GM12878 (cell line): ENCODE measurements at regions of chr20 and their contacts with region 1.

Region 1: DNA sequence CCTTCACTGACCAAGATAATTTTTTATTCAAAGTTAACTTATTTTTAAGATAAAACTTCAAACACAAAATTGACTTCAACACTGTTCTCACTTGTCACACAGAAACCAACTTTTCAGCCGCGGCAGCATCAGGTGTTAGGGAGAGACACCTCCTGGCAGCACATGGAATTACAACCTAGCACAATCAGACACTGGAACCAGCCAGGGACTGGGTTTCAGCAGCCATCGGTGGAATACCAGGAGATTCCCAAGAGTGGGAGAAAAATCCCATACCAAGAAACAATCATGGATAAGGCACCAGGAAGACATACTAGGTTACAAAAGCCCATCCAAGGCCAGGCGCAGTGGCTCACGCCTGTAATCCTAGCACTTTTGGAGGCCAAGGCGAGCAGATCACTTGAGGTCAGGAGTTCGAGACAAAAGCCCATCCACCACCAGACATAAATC is 70.0 kb downstream of the SNX5 start:
- DNase-seq: no peak
- ATAC-seq: peak; percentile 54
- H3K4me3 ChIP-seq: no peak overlapping the region
- H3K27ac ChIP-seq: no peak overlapping the region
- H3K4me1 ChIP-seq: peaks cover 35% of the 10 kb centered on the region
- H3K27me3 ChIP-seq: no peaks in the 10 kb centered on the region
- CTCF ChIP-seq: peak; percentile 89 to 94 (median 91)
- EP300 ChIP-seq: no peak
- POLR2A ChIP-seq: no peak
- RAD21 ChIP-seq: peak; percentile 100

Region 2: GRCh38 chr20:17504898-17505635 is 393.5 kb before region 1 on chr20:
- CTCF ChIA-PET with region 1: interaction called, 12 read pairs
- POLR2A ChIA-PET with region 1: no interaction called
- RAD21 ChIA-PET with region 1: interaction called, 8 read pairs
- SMC1A ChIA-PET with region 1: no interaction called
- in situ Hi-C with region 1: no loop called
- intact Hi-C with region 1: loop called (anchors 1 kb)
- DNase-seq: peak; percentile 25
- ATAC-seq: peak; percentile 92
- H3K4me3 ChIP-seq: peak overlapping the region; percentile 56; the same call in 1 of the 2 replicates
- H3K27ac ChIP-seq: no peak overlapping the region
- H3K4me1 ChIP-seq: peaks cover 3% of the 10 kb centered on the region
- H3K27me3 ChIP-seq: no peaks in the 10 kb centered on the region
- CTCF ChIP-seq: peak; percentile 59 to 71 (median 61)
- EP300 ChIP-seq: no peak
- POLR2A ChIP-seq: no peak
- RAD21 ChIP-seq: peak; percentile 75

Region 3: GRCh38 chr20:17654649-17655285 is 243.8 kb before region 1 on chr20:
- CTCF ChIA-PET with region 1: interaction called, 8 read pairs
- POLR2A ChIA-PET with region 1: no interaction called
- RAD21 ChIA-PET with region 1: no interaction called
- SMC1A ChIA-PET with region 1: interaction called, 4 read pairs
- in situ Hi-C with region 1: no loop called
- intact Hi-C with region 1: loop called (anchors 10 kb)
- DNase-seq: no peak
- ATAC-seq: no peak
- H3K4me3 ChIP-seq: no peak overlapping the region
- H3K27ac ChIP-seq: no peak overlapping the region
- H3K4me1 ChIP-seq: peaks cover 1% of the 10 kb centered on the region
- H3K27me3 ChIP-seq: no peaks in the 10 kb centered on the region
- CTCF ChIP-seq: peak; percentile 25 to 43 (median 32); a peak in 4 of 6 replicates
- EP300 ChIP-seq: no peak
- POLR2A ChIP-seq: no peak
- RAD21 ChIP-seq: peak; percentile 33

Region 4: DNA sequence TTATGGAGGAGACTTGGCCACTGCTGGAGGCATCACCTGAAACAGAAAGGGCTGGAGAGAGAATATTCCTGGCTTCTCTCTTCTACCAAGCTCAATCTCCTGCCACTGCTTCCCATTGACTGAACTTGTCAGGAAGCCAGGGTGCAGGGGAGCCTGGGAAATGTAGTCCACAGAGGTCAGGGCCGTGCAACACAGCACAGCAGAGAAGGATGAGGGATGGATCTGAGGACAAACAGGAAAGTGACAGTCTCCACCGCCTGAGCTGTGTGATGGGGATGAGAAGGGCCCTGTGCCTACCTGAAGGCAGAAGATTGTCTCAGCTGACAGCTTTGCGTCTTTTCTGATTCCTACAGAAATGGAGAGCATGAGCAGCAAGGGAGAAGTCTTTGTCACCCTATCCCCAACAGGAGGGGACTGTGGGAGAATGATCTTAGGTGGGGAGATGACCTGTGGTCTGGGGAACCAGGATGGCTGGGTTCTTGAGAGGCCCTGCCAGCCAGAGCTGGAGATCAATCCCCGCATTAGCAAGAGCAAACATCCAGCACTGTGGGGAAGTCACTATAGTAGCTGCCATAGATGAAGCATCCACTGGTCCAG is 44.2 kb before region 1 on chr20:
- CTCF ChIA-PET with region 1: interaction called, 10 read pairs
- POLR2A ChIA-PET with region 1: no interaction called
- RAD21 ChIA-PET with region 1: interaction called, 15 read pairs
- SMC1A ChIA-PET with region 1: interaction called, 42 read pairs
- in situ Hi-C with region 1: no loop called
- intact Hi-C with region 1: loop called (anchors 2 kb)
- DNase-seq: no peak
- ATAC-seq: peak; percentile 36
- H3K4me3 ChIP-seq: no peak overlapping the region
- H3K27ac ChIP-seq: peak overlapping the region; percentile 17; the same call in 1 of the 2 replicates
- H3K4me1 ChIP-seq: peaks cover 48% of the 10 kb centered on the region
- H3K27me3 ChIP-seq: no peaks in the 10 kb centered on the region
- CTCF ChIP-seq: no peak
- EP300 ChIP-seq: no peak
- POLR2A ChIP-seq: no peak
- RAD21 ChIP-seq: no peak

Region 5: DNA sequence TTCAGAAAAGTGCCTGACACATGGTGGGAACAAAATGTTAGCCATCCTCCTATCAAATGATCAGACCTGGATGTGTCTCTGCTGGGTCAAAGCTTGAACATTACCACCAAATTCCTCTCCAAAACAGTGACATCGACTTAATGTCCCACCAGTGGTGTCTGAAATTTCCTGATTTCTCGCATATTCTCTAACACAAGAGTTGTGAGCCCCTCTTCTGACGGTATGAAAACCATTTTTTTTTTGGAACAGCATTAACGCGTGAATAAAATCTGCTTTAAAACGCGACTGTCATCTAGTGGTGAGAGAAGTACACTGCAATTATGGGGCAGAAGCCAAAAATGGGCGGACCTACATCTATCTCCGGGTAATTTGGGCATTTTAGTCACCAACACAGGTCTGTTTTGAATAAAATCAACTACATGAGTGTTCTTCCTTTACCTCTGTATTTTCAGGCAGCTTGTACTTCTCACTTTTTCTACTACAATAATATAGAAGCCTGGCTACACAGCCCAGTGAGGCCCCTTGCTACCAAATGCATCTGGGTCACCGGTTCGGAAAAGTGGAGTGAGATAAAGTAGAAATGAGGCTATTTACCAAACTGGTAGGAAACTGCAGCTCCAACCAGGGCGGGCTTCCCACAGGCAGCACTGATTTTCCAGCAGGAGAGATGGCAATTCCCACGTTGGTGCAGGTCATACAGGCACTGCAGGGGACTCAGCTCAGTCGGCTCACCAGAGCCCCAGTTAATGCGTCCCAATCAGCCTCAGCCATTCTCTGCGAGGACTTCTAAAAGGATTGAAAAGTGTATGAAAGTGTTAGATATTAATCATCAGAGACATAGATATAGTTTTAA is 97.6 kb after region 1 on chr20:
- CTCF ChIA-PET with region 1: interaction called, 27 read pairs
- POLR2A ChIA-PET with region 1: no interaction called
- RAD21 ChIA-PET with region 1: interaction called, 4 read pairs
- SMC1A ChIA-PET with region 1: interaction called, 25 read pairs
- in situ Hi-C with region 1: no loop called
- intact Hi-C with region 1: loop called (anchors 2 kb)
- DNase-seq: no peak
- ATAC-seq: peak; percentile 61
- H3K4me3 ChIP-seq: no peak overlapping the region
- H3K27ac ChIP-seq: no peak overlapping the region
- H3K4me1 ChIP-seq: peaks cover 21% of the 10 kb centered on the region
- H3K27me3 ChIP-seq: no peaks in the 10 kb centered on the region
- CTCF ChIP-seq: peak; percentile 97 to 99 (median 98)
- EP300 ChIP-seq: no peak
- POLR2A ChIP-seq: no peak
- RAD21 ChIP-seq: peak; percentile 99

Region 6: GRCh38 chr20:18304585-18304984 is 406.0 kb after region 1 on chr20:
- CTCF ChIA-PET with region 1: no interaction called
- POLR2A ChIA-PET with region 1: no interaction called
- RAD21 ChIA-PET with region 1: no interaction called
- SMC1A ChIA-PET with region 1: no interaction called
- in situ Hi-C with region 1: no loop called
- intact Hi-C with region 1: no loop called
- DNase-seq: no peak
- ATAC-seq: no peak
- H3K4me3 ChIP-seq: no peak overlapping the region
- H3K27ac ChIP-seq: no peak overlapping the region
- H3K4me1 ChIP-seq: no peaks in the 10 kb centered on the region
- H3K27me3 ChIP-seq: no peaks in the 10 kb centered on the region
- CTCF ChIP-seq: peak in 2 of 3 experiments; percentile 22 to 28; a peak in 1 of 6 replicates
- EP300 ChIP-seq: no peak
- POLR2A ChIP-seq: no peak
- RAD21 ChIP-seq: no peak